Right ventricle myocardium superior (tissue), 1 donor: ENCODE measurements at regions of chr4 and their contacts with region 1.

Region 1: DNA sequence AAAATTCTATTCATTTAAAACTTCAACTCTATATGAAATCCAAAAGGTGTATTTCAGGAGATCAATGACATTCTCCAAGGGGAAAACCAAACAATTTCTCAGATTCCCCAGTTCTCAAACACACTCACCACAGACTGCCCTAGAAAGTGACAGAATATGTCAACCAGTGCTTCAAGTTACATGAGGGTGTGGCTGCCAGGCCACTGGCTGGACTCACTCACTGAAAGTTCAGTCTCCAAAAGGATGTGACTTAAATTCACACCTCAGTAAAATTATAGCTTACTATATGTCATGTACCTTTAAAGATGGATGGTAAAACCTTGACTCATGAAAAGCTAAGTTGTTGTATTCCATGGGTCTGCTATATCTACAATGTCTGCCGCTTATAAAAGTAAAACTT is 7.3 kb downstream of the INPP4B start:
- DNase-seq: no peak
- ATAC-seq: no peak

Region 2: DNA sequence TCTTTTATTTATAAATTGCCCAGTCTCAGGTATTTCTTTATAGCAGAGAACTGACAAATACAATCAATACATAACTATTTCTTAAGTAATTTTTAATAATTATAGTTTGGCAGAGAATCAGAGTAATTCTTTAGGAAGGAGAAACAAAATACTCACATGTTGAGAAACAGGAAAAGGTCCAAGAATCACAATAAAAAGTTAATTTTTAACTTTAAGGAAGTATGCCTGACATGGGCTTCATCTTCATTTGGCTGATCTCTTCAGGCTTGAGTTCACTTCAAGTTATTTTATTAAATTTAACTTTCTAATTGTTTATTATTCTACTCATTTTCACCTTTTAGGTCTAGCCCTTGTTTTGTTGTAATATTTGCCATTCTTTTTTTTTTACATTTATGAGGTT is 1669.4 kb before region 1 on chr4:
- intact Hi-C with region 1: loop called (anchors 10 kb)
- DNase-seq: no peak
- ATAC-seq: no peak

Region 3: GRCh38 chr4:143118663-143119062 is 279.9 kb after region 1 on chr4:
- intact Hi-C with region 1: no loop called
- DNase-seq: no peak
- ATAC-seq: no peak